IMR-90 (cell line): ENCODE measurements at regions of chr4 and their contacts with region 1.

Region 1: GRCh38 chr4:24419181-24420034 is 164.9 kb downstream of the DHX15 start:
- DNase-seq: peak; percentile 69
- ATAC-seq: peak; percentile 95
- H3K4me3 ChIP-seq: no peak overlapping the region
- H3K27ac ChIP-seq: no peak overlapping the region
- H3K4me1 ChIP-seq: peaks cover 4% of the 10 kb centered on the region; the same call in 1 of the 2 replicates
- H3K27me3 ChIP-seq: no peaks in the 10 kb centered on the region
- CTCF ChIP-seq: peak; percentile 94
- POLR2A ChIP-seq: no peak
- RAD21 ChIP-seq: peak; percentile 97

Region 2: DNA sequence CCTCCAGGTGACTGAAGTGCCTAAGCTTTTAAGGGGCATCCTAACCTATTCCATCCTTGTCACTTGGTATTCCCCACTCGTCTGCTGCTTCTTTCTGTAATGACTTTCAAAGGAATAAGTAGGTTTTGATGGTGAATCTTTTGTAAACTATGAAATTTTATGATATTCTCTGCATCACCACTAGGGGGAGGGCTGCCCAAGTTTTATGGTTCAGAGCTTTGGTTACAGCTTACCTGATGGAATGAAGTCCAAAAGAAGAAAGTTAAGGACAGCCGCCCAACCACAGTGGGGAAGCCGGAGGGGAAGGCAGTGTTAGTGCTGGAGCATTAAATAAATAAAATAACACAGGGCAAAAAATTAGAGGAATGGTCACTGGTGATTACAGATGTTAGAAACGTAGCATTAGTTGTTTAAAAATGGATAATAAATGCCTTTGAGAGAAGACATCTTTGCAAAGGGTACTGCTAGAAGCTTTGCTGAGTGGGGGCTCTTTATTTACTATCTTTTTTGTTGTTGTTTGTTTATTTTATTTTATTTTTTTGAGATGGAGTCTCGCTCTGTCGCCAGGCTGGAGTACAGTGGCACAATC is 1521.8 kb before region 1 on chr4:
- CTCF ChIA-PET with region 1: no interaction called
- POLR2A ChIA-PET with region 1: no interaction called
- dilution Hi-C with region 1: no loop called
- in situ Hi-C with region 1: no loop called
- intact Hi-C with region 1: loop called (anchors 2 kb)
- DNase-seq: peak; percentile 5
- ATAC-seq: no peak
- H3K4me3 ChIP-seq: no peak overlapping the region
- H3K27ac ChIP-seq: no peak overlapping the region
- H3K4me1 ChIP-seq: no peaks in the 10 kb centered on the region
- H3K27me3 ChIP-seq: no peaks in the 10 kb centered on the region
- CTCF ChIP-seq: peak; percentile 59
- POLR2A ChIP-seq: no peak
- RAD21 ChIP-seq: peak; percentile 35; the same call in 1 of the 2 replicates

Region 3: GRCh38 chr4:23135792-23136645 is 1283.4 kb before region 1 on chr4:
- CTCF ChIA-PET with region 1: interaction called, 3 read pairs
- POLR2A ChIA-PET with region 1: no interaction called
- dilution Hi-C with region 1: no loop called
- in situ Hi-C with region 1: no loop called
- intact Hi-C with region 1: loop called (anchors 2 kb)
- DNase-seq: peak; percentile 41
- ATAC-seq: 0 out of 2 replicates have a peak, but pooled peaks have one; percentile 46
- H3K4me3 ChIP-seq: no peak overlapping the region
- H3K27ac ChIP-seq: no peak overlapping the region
- H3K4me1 ChIP-seq: no peaks in the 10 kb centered on the region
- H3K27me3 ChIP-seq: no peaks in the 10 kb centered on the region
- CTCF ChIP-seq: peak; percentile 51
- POLR2A ChIP-seq: no peak
- RAD21 ChIP-seq: peak; percentile 42

Region 4: DNA sequence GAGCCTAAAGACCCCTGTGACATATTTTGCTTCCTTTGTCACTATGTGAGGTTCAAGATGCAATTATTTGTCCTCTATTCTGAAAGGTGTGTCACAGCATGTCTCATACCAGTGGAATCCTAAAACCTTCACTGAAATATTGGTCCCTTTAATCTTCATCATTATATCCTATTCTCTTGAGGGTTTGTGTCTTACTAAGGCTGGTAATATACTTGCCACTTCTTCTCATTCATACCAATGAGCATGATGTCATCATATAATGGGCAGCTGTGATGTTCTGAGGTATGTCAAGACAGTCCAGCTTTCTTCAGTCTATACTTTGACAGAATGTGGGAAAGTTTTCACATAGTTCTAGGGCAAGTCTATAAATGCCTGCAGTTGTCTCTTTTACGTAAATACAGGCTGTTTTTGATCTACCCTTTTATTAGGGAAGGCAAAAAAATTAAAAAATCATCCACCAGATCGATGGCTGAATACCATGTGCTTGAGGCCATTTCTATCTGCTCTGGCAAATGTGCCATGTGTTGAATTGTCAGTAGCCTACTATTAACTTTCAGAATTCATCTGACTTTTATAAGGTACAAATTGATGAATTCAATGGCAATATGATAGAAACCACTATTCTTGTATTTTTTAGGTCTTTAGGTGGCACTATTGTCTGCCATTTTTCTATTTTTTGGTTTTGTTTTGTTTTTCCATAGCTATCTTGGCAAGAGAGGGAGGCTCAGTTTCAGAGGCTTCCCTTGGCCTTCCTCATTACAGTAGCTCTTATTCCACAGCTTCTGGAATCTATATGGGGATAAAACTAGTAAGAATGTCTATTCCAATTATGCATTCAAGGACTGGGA is 738.5 kb before region 1 on chr4:
- CTCF ChIA-PET with region 1: no interaction called
- POLR2A ChIA-PET with region 1: no interaction called
- dilution Hi-C with region 1: no loop called
- in situ Hi-C with region 1: loop called (anchors 25 kb)
- intact Hi-C with region 1: loop called (anchors 1 kb)
- DNase-seq: peak; percentile 8
- ATAC-seq: peak; percentile 51
- H3K4me3 ChIP-seq: no peak overlapping the region
- H3K27ac ChIP-seq: no peak overlapping the region
- H3K4me1 ChIP-seq: no peaks in the 10 kb centered on the region
- H3K27me3 ChIP-seq: no peaks in the 10 kb centered on the region; the same call in 1 of the 2 replicates
- CTCF ChIP-seq: peak; percentile 37
- POLR2A ChIP-seq: no peak
- RAD21 ChIP-seq: peak; percentile 39

Region 5: DNA sequence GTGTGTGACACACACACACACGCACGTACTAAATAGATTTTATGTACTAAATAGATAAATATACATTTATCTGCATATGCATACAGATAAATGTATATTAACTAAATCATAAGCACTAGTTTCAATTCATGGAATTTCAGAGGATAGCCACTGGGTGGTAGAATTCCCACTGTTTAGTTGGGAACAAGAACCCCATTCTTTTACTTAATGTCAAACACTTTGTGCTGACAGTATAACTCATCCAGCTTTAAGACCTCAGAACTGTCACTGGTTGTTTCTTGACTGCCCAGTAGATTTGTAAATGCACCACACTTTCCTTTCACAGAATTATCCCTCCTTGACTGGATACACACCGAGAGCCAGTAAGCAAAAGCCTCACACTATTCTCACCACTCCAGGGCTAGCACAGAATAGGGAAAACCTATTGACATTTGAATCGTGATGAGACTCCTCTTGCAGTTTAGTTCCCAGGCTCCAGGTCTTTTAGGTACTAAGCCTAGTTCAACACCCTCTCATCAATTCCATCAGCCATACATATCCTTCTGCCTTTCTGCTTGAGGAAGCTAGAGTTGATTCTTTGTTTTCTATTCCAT is 561.9 kb before region 1 on chr4:
- CTCF ChIA-PET with region 1: interaction called, 9 read pairs
- POLR2A ChIA-PET with region 1: no interaction called
- dilution Hi-C with region 1: no loop called
- in situ Hi-C with region 1: no loop called
- intact Hi-C with region 1: loop called (anchors 1 kb)
- DNase-seq: peak; percentile 47
- ATAC-seq: peak; percentile 59
- H3K4me3 ChIP-seq: no peak overlapping the region
- H3K27ac ChIP-seq: no peak overlapping the region
- H3K4me1 ChIP-seq: peaks cover 7% of the 10 kb centered on the region
- H3K27me3 ChIP-seq: no peaks in the 10 kb centered on the region; the same call in 1 of the 2 replicates
- CTCF ChIP-seq: peak; percentile 42
- POLR2A ChIP-seq: no peak
- RAD21 ChIP-seq: peak; percentile 44

Region 6: GRCh38 chr4:23959396-23960148 is 459.8 kb before region 1 on chr4:
- CTCF ChIA-PET with region 1: no interaction called
- POLR2A ChIA-PET with region 1: no interaction called
- dilution Hi-C with region 1: no loop called
- in situ Hi-C with region 1: no loop called
- intact Hi-C with region 1: loop called (anchors 5 kb)
- DNase-seq: no peak
- ATAC-seq: no peak
- H3K4me3 ChIP-seq: no peak overlapping the region
- H3K27ac ChIP-seq: no peak overlapping the region
- H3K4me1 ChIP-seq: no peaks in the 10 kb centered on the region; the same call in 1 of the 2 replicates
- H3K27me3 ChIP-seq: peaks cover 5% of the 10 kb centered on the region; the same call in 1 of the 2 replicates
- CTCF ChIP-seq: no peak
- POLR2A ChIP-seq: no peak
- RAD21 ChIP-seq: no peak

Region 7: DNA sequence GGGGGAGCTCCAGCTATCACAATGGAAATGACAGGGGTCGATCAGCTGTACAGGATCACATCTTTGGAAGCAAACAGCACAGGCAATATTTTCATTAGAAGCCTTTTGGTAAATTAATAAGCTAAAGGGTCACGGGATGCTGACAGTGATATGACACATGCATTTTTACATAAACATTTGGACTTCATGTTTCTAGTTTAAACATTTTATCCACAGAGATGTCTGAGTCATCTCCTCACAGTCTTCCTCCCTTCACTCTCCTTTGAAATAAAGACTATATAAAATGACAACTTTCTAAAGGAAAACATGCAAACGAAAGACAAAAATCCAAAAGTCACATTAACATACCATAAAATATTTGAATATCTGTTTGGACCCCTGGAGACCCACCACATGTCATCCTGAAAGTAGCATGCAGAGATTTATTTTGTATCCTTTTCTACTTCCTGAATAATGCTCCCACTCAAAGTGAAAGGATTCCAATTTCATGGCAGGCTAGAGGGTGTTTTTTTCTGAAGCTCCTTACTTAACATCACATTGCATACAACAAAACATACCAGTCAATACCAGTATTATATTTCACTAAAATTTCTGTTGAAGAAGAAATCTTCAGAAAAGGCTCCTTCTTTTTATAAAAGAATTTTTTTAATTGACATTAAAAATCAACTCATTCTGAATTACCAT is 329.4 kb before region 1 on chr4:
- CTCF ChIA-PET with region 1: no interaction called
- POLR2A ChIA-PET with region 1: no interaction called
- dilution Hi-C with region 1: no loop called
- in situ Hi-C with region 1: no loop called
- intact Hi-C with region 1: loop called (anchors 10 kb)
- DNase-seq: peak; percentile 90
- ATAC-seq: peak; percentile 72
- H3K4me3 ChIP-seq: peak overlapping the region; percentile 46
- H3K27ac ChIP-seq: peak overlapping the region; percentile 92
- H3K4me1 ChIP-seq: peaks cover 14% of the 10 kb centered on the region
- H3K27me3 ChIP-seq: no peaks in the 10 kb centered on the region
- CTCF ChIP-seq: peak; percentile 11; the same call in 1 of the 2 replicates
- POLR2A ChIP-seq: no peak
- RAD21 ChIP-seq: no peak; the same call in 1 of the 2 replicates

Region 8: DNA sequence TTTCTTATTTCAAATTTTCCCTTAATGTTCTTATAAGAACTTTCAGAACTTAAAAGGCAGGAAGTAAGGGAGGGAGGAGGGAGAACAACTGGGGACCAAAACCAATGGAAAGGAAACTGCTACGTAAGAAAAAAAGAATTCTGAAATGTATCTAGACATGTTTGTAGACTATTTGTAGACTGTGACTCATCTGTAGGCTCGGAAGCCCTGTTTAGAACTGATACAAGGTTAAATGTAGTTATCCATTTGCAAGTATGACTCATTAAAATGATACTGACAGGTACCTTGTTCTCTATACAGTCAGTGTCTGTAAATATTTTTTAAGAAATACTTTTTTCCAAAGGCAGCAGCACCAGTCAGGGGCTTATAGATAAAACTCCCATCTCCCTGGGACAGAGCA is 37.0 kb before region 1 on chr4:
- CTCF ChIA-PET with region 1: no interaction called
- POLR2A ChIA-PET with region 1: no interaction called
- dilution Hi-C with region 1: no loop called
- in situ Hi-C with region 1: no loop called
- intact Hi-C with region 1: no loop called
- DNase-seq: peak; percentile 78
- ATAC-seq: peak; percentile 56
- H3K4me3 ChIP-seq: no peak overlapping the region
- H3K27ac ChIP-seq: no peak overlapping the region
- H3K4me1 ChIP-seq: no peaks in the 10 kb centered on the region
- H3K27me3 ChIP-seq: no peaks in the 10 kb centered on the region
- CTCF ChIP-seq: no peak
- POLR2A ChIP-seq: no peak
- RAD21 ChIP-seq: no peak